Activated CD4-positive, alpha-beta memory T cell treated with anti-CD3 and anti-CD28 coated beads for 36 hours (primary cell): ENCODE measurements at regions of chr1 and their contacts with region 1.

Region 1: DNA sequence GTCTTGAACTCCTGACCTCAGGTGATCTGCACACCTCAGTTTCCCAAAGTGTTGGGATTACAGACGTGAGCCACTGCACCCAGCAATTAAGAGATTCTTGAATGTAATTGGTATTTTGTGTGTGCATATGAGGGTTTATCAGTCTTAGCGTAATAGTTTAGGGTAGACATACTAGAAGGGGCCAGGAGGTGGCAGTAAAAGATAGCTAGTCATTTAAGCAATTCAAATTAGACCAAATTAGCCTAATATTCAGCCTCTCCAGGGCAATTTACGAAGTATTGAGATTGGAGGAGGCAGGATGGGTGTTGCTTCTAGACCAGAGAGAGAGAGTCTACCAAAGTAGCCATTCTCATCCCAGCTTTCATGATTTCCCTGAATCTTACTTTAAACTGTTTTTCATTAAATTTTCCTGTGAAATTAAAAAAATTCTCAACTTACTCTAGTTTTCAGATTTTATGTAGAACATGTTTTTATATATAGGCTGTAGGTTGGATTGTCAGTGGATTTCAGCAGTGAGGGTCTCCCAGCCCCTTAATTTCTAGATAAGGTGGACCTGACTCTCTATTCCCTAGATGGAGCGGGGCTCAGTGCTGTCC is 119.7 kb downstream of the HHAT start:
- DNase-seq: no peak
- H3K4me3 Mint-ChIP-seq: no peak overlapping the region
- H3K27ac Mint-ChIP-seq: no peak overlapping the region
- H3K4me1 Mint-ChIP-seq: peaks cover 27% of the 10 kb centered on the region
- H3K27me3 Mint-ChIP-seq: peaks cover 2% of the 10 kb centered on the region

Region 2: GRCh38 chr1:210400043-210400840 is 48.2 kb before region 1 on chr1:
- CTCF ChIA-PET with region 1: interaction called, 54 read pairs
- POLR2A ChIA-PET with region 1: interaction called, 7 read pairs
- intact Hi-C with region 1: loop called (anchors 1 kb)
- DNase-seq: peak; percentile 71
- H3K4me3 Mint-ChIP-seq: peak overlapping the region; percentile 55
- H3K27ac Mint-ChIP-seq: peak overlapping the region; percentile 68
- H3K4me1 Mint-ChIP-seq: peaks cover 43% of the 10 kb centered on the region
- H3K27me3 Mint-ChIP-seq: no peaks in the 10 kb centered on the region

Region 3: GRCh38 chr1:210584439-210585113 is 136.2 kb after region 1 on chr1:
- CTCF ChIA-PET with region 1: interaction called, 9 read pairs
- POLR2A ChIA-PET with region 1: no interaction called
- intact Hi-C with region 1: loop called (anchors 2 kb)
- DNase-seq: peak; percentile 85
- H3K4me3 Mint-ChIP-seq: no peak overlapping the region
- H3K27ac Mint-ChIP-seq: no peak overlapping the region
- H3K4me1 Mint-ChIP-seq: no peaks in the 10 kb centered on the region
- H3K27me3 Mint-ChIP-seq: peaks cover 3% of the 10 kb centered on the region

Region 4: GRCh38 chr1:211133836-211134669 is 685.7 kb after region 1 on chr1 and contains the start of gene KCNH1:
- CTCF ChIA-PET with region 1: interaction called, 76 read pairs
- POLR2A ChIA-PET with region 1: no interaction called
- intact Hi-C with region 1: loop called (anchors 1 kb)
- DNase-seq: peak; percentile 90
- H3K4me3 Mint-ChIP-seq: peak within 1 kb of the TSS; percentile 63
- H3K27ac Mint-ChIP-seq: no peak within 1 kb of the TSS
- H3K4me1 Mint-ChIP-seq: peaks cover 10% of the 10 kb centered on the region
- H3K27me3 Mint-ChIP-seq: peaks cover 34% of the 10 kb centered on the region
- total RNA-seq, gene KCNH1: not detected

Region 5: DNA sequence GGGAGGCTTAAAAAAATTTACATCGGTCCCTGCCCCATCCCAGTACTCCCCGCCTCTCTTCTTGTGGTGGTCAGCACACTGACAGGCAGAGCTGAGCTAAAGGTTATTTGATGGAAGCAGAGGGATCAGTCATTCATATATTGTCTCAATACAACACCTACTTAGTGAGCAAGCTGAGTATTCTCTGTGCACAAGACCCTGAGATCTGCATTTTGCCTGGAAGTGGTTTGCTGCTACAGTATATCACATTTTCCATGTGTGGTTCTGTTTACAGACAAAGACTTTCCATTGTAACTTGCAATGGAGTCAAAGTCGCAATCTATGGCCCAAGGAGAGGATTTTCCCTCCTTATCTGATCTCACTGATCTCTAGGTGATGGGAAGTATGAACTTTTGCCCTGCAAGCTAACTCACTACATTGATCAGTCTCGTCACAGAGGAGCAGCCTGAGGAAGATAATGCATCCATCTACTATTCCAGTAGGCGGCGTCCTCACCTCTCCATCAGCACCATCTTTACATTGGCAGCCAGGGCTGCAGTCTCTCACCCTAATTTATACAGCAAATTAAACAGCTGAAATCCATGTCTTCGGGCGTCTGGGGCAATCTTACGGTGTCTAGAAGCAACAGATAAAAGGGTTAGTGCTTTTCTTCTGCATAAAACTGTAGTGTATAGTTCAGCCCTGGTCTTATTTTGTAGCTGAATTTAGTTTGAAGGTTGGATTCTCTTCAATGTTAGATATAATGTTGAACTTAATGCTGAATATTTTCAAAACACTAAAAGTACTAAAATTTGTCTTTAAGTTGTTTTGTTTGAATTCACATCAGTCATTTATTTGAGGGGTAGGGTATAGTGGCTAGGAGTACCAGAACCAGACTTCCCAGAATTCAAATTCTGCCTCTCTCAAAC is 875.0 kb after region 1 on chr1:
- CTCF ChIA-PET with region 1: interaction called, 3 read pairs
- POLR2A ChIA-PET with region 1: no interaction called
- intact Hi-C with region 1: loop called (anchors 1 kb)
- DNase-seq: peak; percentile 78
- H3K4me3 Mint-ChIP-seq: no peak overlapping the region
- H3K27ac Mint-ChIP-seq: peak overlapping the region; percentile 68
- H3K4me1 Mint-ChIP-seq: peaks cover 55% of the 10 kb centered on the region
- H3K27me3 Mint-ChIP-seq: no peaks in the 10 kb centered on the region